Dorsolateral prefrontal cortex (tissue), 120 donors: ENCODE measurements at regions of chr6 and their contacts with region 1.

Region 1: DNA sequence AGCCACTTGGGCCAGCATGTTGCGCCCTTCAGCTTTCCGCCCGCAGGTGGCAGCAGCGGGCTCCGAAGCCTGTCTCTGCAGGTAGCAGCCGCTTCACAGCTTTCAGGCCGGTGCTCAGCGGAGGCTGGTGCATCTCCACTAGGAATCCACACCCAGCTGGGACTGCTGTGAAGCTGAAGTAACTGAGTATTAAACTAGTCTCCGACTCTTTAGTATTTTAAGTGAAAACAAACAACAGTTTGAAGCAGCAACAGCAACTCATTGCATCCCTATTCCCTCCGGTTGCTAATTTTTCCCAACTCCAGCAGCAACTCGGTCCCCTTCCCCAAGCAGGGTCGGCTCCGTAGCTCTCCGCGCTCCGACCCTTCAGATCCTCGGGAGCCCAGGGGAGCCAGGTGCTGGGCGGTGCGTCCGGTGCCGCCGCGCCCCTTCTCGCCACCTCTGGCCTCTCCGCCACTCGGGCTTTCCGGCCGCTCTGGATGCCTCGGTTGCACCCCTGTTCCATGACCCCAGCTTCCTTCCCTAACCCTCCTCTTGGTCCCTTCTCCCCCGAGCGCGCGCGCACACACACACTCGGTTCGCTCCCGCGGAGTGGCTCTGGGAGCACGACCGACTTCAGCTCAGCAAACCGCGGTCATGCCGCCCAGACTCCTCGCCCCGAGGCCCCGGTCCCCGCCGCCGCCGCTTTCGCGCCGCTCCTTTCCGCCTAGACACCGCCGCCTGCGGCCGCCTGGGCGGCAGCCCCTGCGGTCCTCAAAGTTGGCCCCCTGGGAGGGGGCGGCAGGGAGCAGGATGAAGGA is 768 bp upstream of the NKAIN2 start:
- DNase-seq: peak; percentile 87 to 92 (median 90)
- H3K4me3 ChIP-seq: peak overlapping the region; percentile 50 to 89 (median 78)
- H3K27ac ChIP-seq: peak overlapping the region in 58 of 59 donors; percentile 6 to 96 (median 87)
- H3K27me3 ChIP-seq: peaks cover 0 to 3% (median 0%) of the 10 kb centered on the region in 45 donors
- CTCF ChIP-seq: peak; percentile 82 to 99 (median 94)

Region 2: GRCh38 chr6:123763561-123764303 is 39.2 kb before region 1 on chr6:
- intact Hi-C with region 1: no loop called
- DNase-seq: no peak
- H3K4me3 ChIP-seq: no peak overlapping the region
- H3K27ac ChIP-seq: no peak overlapping the region
- H3K27me3 ChIP-seq: peaks cover 0 to 3% (median 0%) of the 10 kb centered on the region in 45 donors
- CTCF ChIP-seq: no peak

Region 3: DNA sequence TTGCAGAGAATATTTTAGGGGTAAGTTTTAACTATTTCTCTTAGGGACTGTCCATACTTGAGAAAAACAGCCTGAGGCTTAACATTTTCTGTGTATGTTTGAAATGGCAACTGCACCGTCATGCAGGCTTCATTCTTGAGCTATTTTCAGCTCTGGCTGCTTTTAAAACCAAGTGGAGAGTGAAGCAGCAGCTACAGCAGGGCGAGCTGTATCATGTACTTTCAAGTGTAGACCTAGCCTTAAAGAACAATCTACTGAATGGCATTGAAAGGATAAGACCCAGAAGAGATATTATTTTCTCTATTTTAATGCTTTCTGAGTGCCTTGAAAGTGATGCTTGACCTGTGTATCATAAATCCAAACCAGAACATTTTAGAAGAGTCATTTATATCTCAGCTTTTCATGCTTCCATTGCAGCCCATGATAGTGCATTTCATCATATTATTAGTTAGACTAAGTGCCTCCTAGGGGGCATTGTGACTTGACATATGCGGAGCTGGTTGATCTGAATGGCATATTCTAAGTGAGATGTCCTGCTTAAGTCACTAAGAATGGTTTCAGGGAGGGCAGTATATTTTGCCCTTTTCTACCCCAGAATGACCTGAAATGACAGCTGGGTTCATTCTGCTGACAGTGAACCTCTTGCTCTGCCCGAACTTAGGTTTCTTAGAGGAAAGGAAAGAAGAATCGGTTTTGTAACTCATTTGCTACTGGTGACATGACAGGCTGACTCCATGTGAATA is 86.0 kb after region 1 on chr6:
- intact Hi-C with region 1: loop called (anchors 5 kb)
- DNase-seq: peak in 4 of 10 donors; percentile 5 to 36 (median 32)
- H3K4me3 ChIP-seq: peak overlapping the region in 8 of 59 donors; percentile 1 to 19 (median 11)
- H3K27ac ChIP-seq: peak overlapping the region in 55 of 59 donors; percentile 5 to 83 (median 60)
- H3K27me3 ChIP-seq: no peaks in the 10 kb centered on the region
- CTCF ChIP-seq: peak in 1 of 56 donors; percentile 17

Region 4: GRCh38 chr6:123965894-123966293 is 163.0 kb after region 1 on chr6:
- intact Hi-C with region 1: loop called (anchors 1 to 5 kb)
- DNase-seq: peak in 1 of 10 donors; percentile 18
- H3K4me3 ChIP-seq: peak overlapping the region in 1 of 59 donors; percentile 4
- H3K27ac ChIP-seq: no peak overlapping the region
- H3K27me3 ChIP-seq: no peaks in the 10 kb centered on the region
- CTCF ChIP-seq: peak in 52 of 56 donors; percentile 23 to 73 (median 50)

Region 5: DNA sequence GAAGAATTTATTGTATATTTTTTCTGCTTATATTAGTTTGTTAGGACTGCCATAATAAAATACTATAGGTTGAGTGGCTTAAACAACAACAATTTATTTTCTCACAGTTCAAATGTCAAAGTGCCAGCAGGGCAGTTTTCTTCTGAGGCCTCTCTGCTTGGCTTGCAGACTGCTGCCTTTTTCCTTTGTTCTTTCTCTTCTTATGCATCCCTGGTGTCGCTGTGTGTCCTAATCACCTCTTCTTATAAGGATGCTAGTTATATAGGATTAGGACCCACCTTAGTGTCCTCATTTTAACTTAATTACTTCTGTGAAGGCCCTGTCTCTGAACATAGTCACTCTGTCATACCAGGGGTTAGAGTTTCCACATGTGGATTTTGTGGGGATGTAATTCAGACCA is 355.1 kb after region 1 on chr6:
- intact Hi-C with region 1: loop called in 1 of 2 experiments (anchors 5 kb)
- DNase-seq: no peak
- H3K4me3 ChIP-seq: no peak overlapping the region
- H3K27ac ChIP-seq: no peak overlapping the region
- H3K27me3 ChIP-seq: no peaks in the 10 kb centered on the region
- CTCF ChIP-seq: no peak

Region 6: GRCh38 chr6:124795643-124796463 is 993.0 kb after region 1 on chr6:
- intact Hi-C with region 1: loop called (anchors 2 to 5 kb)
- DNase-seq: peak; percentile 46 to 81 (median 67)
- H3K4me3 ChIP-seq: no peak overlapping the region
- H3K27ac ChIP-seq: peak overlapping the region in 4 of 59 donors; percentile 1 to 65 (median 26)
- H3K27me3 ChIP-seq: no peaks in the 10 kb centered on the region
- CTCF ChIP-seq: peak in 55 of 56 donors; percentile 24 to 82 (median 67)